Activated CD4-positive, alpha-beta memory T cell treated with anti-CD3 and anti-CD28 coated beads for 36 hours (primary cell): ENCODE measurements at regions of chr12 and their contacts with region 1.

Region 1: DNA sequence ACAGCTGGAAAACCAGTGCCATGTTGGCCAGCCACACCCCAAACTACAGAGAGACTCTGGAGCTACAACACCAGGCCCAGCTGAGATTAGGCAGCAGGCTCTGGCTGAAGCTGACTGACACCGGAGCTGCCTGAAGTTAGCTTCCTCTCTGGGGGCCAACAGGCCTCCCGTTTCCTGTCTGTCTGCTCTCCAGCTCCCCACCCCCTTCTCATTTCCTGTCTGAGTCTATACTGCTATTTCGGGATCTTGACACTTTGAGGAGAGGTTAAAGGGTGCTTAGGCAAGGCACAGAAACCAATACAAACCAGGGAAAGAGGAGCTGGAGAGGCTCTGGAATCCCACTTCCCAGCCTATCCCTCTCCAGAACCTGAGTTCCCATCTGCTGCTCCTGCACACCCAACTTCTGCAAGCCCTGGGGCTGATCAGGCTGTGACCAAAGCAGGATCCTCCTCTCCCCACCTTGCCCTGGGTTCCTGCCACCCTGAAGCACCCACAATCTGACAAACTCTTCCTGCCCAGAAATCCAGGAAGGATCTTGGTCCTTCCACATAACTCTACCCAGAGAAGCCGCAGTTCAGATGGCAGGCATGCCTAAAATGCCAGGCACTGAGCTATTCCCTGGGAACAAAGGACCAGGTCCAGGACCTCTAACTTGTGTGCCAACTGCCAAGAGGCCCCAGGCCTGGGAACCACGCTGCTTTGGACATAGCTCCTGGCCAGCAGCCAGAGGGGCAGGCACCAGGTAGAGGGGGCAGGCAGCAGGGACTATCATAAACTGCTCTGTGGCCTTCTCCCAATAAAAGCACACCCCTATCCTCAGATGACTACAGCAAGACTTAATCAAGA is 39.9 kb downstream of the PRPF40B start:
- DNase-seq: peak; percentile 86
- H3K4me3 Mint-ChIP-seq: peak overlapping the region; percentile 67
- H3K27ac Mint-ChIP-seq: peak overlapping the region; percentile 95
- H3K4me1 Mint-ChIP-seq: peaks cover 70% of the 10 kb centered on the region
- H3K27me3 Mint-ChIP-seq: no peaks in the 10 kb centered on the region

Region 2: GRCh38 chr12:49451468-49452259 is 211.6 kb before region 1 on chr12:
- CTCF ChIA-PET with region 1: no interaction called
- POLR2A ChIA-PET with region 1: no interaction called
- intact Hi-C with region 1: no loop called
- DNase-seq: no peak
- H3K4me3 Mint-ChIP-seq: no peak overlapping the region
- H3K27ac Mint-ChIP-seq: peak overlapping the region; percentile 68
- H3K4me1 Mint-ChIP-seq: peaks cover 18% of the 10 kb centered on the region
- H3K27me3 Mint-ChIP-seq: no peaks in the 10 kb centered on the region

Region 3: DNA sequence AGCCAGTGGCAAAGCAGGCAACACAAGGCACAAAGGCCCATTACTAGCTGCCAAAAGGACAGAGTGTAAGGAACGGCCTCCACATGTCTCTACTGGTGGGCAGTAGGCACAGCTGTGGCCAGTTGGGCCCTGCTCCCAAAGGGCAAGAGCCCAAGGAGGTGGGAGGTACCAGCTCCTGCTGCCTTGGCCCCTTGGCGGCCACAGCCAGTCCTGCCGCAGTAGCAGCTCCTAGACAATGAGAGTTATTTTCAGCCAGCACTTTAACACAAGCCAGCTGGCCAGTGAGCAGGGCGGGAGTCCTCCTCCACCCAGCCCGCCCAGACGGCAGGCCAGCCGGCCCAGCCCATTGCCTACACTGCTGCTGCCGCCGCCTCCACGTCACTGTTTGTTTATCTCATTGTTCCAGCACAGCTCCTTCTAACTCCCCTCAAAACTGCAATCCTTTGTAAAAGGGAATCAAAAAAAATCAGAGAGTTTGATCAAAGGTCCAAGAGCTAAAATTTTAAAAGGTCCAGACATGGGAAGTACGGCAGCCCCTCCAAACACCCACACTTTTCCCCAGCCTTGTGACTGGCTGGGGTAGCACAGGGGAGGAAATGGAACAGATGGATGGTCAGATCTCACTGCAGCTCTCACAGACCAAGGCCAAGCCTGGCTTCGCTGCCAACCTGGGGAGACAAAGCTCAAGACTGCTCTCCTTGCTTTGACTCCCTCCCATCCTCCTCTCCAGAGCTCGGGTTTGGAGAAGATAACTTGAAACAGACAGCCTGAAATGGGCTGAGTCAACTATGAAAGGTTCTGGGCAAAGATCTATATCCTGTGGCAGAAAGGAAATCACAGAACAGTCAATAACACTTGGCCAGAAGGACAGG is 10.5 kb after region 1 on chr12:
- CTCF ChIA-PET with region 1: interaction called, 7 read pairs
- POLR2A ChIA-PET with region 1: interaction called, 40 read pairs
- intact Hi-C with region 1: loop called (anchors 1 kb)
- DNase-seq: peak; percentile 16
- H3K4me3 Mint-ChIP-seq: peak overlapping the region; percentile 2
- H3K27ac Mint-ChIP-seq: peak overlapping the region; percentile 94
- H3K4me1 Mint-ChIP-seq: peaks cover 75% of the 10 kb centered on the region
- H3K27me3 Mint-ChIP-seq: no peaks in the 10 kb centered on the region

Region 4: GRCh38 chr12:49698619-49699545 is 35.7 kb after region 1 on chr12:
- CTCF ChIA-PET with region 1: interaction called, 10 read pairs
- POLR2A ChIA-PET with region 1: interaction called, 10 read pairs
- intact Hi-C with region 1: loop called (anchors 1 kb)
- DNase-seq: peak; percentile 69
- H3K4me3 Mint-ChIP-seq: peak overlapping the region; percentile 58
- H3K27ac Mint-ChIP-seq: peak overlapping the region; percentile 77
- H3K4me1 Mint-ChIP-seq: peaks cover 41% of the 10 kb centered on the region
- H3K27me3 Mint-ChIP-seq: no peaks in the 10 kb centered on the region

Region 5: DNA sequence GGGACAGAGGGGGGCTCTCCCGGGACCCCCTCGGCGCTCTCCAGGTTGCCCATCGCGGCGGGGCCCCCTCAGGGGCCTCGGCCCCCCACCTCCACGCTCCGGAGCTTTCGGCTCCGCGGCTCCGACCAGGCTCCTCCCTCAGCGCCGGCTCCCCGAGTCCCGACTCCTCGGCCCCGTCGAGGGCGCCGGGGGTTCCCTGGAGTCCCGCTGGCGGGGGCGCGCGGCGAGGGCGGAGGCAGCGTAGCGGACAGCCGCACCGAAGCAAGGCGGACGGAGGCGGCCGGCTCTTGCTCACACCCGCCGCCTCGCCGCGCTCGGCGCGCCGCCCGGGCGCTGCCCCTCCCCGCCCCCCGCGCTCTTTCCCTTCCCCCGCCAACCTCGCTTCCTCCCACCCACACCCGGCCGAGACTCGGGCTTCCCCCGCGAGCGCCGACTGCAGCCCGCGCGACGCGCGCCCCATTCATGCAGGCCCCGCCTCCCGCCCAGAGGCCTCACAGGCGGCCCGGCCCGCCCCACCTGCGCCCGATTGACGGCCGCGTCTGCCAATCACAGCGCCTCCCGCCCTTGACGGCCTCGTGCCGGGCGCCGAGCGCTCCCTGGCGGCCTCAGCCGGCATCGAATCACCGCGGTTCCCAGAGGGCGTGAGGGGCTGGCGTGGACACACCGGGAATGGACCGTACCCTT is 44.0 kb after region 1 on chr12 and contains the start of gene FMNL3:
- CTCF ChIA-PET with region 1: interaction called, 8 read pairs
- POLR2A ChIA-PET with region 1: interaction called, 10 read pairs
- intact Hi-C with region 1: loop called (anchors 1 kb)
- DNase-seq: peak; percentile 98
- H3K4me3 Mint-ChIP-seq: peak within 1 kb of the TSS; percentile 85
- H3K27ac Mint-ChIP-seq: peak within 1 kb of the TSS; percentile 72
- H3K4me1 Mint-ChIP-seq: peaks cover 43% of the 10 kb centered on the region
- H3K27me3 Mint-ChIP-seq: peaks cover 3% of the 10 kb centered on the region
- total RNA-seq, gene FMNL3: 31.2 to 31.9 TPM

Region 6: GRCh38 chr12:49903695-49904423 is 240.6 kb after region 1 on chr12 and contains the start of gene FAIM2:
- CTCF ChIA-PET with region 1: no interaction called
- POLR2A ChIA-PET with region 1: no interaction called
- intact Hi-C with region 1: no loop called
- DNase-seq: peak; percentile 68
- H3K4me3 Mint-ChIP-seq: peak within 1 kb of the TSS; percentile 71
- H3K27ac Mint-ChIP-seq: no peak within 1 kb of the TSS
- H3K4me1 Mint-ChIP-seq: peaks cover 15% of the 10 kb centered on the region
- H3K27me3 Mint-ChIP-seq: no peaks in the 10 kb centered on the region
- total RNA-seq, gene FAIM2: 1.7 to 2.1 TPM